T-cell (primary cell): ENCODE measurements at regions of chr20 and their contacts with region 1.

Region 1: DNA sequence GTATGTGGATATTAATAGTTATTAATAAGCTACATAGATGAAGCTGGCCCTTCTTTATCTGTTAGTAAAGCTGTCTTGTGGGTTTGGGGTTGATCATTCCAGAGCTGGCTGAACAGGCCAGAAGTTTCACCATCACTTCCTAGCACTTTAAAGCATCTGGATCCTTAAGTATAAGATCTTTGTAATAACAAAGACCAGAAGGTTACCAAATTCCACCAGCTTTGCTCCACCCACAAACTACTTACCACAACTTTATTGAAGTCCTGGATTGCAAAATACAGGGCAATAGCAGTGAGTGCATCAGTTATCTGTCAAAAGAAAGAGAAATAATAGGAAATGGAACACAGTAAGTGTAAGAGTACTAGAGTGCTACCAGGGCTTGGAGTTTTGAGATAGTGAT is 33.0 kb downstream of the PIGU start:
- DNase-seq: no peak
- ATAC-seq: no peak
- H3K4me3 ChIP-seq: no peak overlapping the region
- H3K4me3 Mint-ChIP-seq: no peak overlapping the region
- H3K27ac ChIP-seq: no peak overlapping the region
- H3K27ac Mint-ChIP-seq: no peak overlapping the region
- H3K4me1 ChIP-seq: no peaks in the 10 kb centered on the region
- H3K4me1 Mint-ChIP-seq: no peaks in the 10 kb centered on the region
- H3K27me3 ChIP-seq: no peaks in the 10 kb centered on the region
- H3K27me3 Mint-ChIP-seq: no peaks in the 10 kb centered on the region

Region 2: DNA sequence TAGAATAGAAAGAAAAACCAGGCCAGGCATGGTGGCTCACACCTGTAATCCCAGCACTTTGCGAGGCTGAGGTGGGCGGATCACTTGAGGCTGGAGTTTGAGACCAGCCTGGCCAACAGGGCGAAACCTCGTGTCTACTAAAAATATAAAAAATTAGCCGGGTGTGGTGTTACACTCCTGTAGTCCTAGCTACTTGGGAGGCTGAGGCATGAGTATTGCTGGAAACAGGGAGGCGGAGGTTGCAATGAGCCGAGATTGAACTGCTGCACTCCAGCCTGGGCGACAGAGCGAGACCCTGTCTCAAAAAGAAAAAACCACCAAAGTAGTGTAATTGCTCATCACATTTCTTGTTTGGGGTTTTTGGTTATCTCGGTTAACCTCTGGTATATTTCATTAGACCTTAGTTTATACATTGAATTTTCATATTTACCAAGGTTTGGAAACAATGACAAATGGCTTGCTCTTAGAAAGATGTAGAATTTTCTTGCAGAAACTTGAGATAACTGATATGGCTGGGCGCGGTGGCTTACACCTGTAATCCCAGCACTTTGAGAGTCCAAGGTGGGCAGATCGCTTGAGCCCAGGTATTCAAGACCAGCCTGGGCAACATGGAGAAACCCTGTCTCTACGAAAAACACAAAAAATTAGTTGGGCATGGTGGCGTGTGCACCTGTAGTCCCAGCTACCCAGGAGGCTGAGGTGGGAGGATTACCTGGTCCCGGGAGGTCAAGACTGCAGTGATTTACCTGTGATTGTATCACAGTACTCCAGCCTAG is 266.7 kb before region 1 on chr20:
- CTCF ChIA-PET with region 1: interaction called in 1 of 2 experiments, 12 read pairs
- POLR2A ChIA-PET with region 1: no interaction called
- DNase-seq: no peak
- ATAC-seq: no peak
- H3K4me3 ChIP-seq: no peak overlapping the region
- H3K4me3 Mint-ChIP-seq: no peak overlapping the region
- H3K27ac ChIP-seq: peak overlapping the region; percentile 23
- H3K27ac Mint-ChIP-seq: no peak overlapping the region
- H3K4me1 ChIP-seq: peaks cover 0 to 19% of the 10 kb centered on the region in 2 experiments
- H3K4me1 Mint-ChIP-seq: peaks cover 30 to 49% (median 48%) of the 10 kb centered on the region in 3 donors
- H3K27me3 ChIP-seq: no peaks in the 10 kb centered on the region
- H3K27me3 Mint-ChIP-seq: no peaks in the 10 kb centered on the region